ENCODE measurements at regions of chr12 and their contacts with region 1.

Region 1: DNA sequence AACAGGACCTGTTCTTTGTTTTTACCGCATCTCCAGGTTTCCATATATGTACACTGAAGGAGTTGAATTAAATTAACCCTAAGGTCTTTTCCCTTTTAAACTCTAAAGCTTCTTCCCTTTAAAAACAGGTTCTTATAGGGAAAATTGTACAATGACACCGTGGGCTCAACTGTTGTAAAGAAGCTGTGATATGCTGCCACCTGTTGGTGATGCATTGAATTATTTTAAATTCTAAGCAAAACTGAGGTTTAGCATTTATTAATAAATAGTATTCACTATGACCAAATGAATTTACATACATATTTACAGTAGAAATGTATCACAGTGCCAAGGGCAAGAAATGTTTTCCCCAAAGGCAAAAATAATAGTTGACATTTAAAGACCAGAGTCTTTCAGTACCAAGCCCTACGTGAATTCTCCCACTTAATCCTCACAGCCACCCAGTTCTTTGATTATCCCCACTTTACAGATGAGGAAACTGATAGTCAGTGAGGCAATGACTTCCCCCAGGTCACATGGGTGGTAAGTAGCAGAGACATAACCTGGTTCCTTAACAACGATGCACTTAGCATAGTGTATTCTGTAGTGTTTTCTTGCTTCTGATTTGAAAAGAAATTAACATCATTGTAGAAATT is 35.7 kb upstream of the TMEM263 start:
- DNase-seq: no peak
- ATAC-seq: no peak
- H3K4me3 Mint-ChIP-seq: peak overlapping the region; percentile 45
- H3K27ac Mint-ChIP-seq: no peak overlapping the region
- H3K4me1 Mint-ChIP-seq: peaks cover 28% of the 10 kb centered on the region
- H3K27me3 Mint-ChIP-seq: peaks cover 12% of the 10 kb centered on the region
- CTCF ChIP-seq: peak; percentile 63

Region 2: DNA sequence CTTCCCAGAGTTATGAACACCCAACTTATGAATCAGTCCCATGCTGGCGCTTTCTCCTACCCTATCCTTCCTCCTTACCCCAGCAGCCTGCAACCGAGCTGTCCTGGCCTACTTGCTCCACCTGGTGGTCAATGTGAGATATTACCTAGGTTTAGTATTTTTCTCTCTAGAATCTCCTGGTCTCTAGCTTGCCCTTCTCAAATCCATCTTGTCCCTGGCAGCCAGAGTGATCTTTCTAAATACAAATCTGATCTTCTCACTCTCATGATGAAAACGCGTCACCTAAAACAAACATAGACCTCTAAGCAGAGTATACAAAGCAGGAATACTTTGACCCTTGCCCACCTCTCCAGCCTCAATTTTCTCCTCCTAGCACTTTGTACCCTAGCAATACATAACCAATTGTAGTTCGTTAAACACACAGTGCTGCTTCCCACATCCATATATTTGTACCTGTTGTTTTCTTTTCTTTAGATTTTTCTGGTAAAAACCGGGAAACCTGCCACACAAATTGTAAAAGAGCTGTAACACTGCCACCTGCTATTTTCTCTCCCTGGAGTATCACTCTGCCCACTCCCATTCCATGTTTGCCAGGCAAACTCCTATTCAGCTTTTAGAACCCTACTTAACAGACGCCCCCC is 637.5 kb before region 1 on chr12:
- CTCF ChIA-PET with region 1: interaction called, 11 read pairs
- POLR2A ChIA-PET with region 1: no interaction called
- DNase-seq: peak; percentile 30
- ATAC-seq: peak; percentile 95
- H3K4me3 Mint-ChIP-seq: no peak overlapping the region
- H3K27ac Mint-ChIP-seq: no peak overlapping the region
- H3K4me1 Mint-ChIP-seq: no peaks in the 10 kb centered on the region
- H3K27me3 Mint-ChIP-seq: no peaks in the 10 kb centered on the region
- CTCF ChIP-seq: peak; percentile 72

Region 3: DNA sequence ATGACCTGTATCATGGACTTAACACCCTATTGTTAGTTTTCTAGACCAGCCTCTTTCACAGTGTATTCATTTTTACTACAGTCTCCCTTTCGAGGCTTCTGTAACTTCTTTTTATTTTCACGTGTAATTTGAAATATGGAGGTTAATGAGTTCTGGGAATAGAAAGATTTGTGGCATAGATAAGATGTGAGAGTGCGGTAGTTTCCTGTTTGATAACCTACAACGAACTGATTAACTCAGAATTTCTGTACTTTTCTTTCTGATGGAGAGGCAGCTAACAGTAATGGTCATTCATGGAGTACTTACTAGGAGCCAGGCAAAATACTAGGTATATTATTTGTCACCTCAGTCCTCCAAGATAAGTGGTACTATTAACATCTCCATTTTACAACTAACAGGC is 541.2 kb before region 1 on chr12:
- CTCF ChIA-PET with region 1: interaction called, 17 read pairs
- POLR2A ChIA-PET with region 1: no interaction called
- DNase-seq: no peak
- ATAC-seq: no peak
- H3K4me3 Mint-ChIP-seq: no peak overlapping the region
- H3K27ac Mint-ChIP-seq: no peak overlapping the region
- H3K4me1 Mint-ChIP-seq: no peaks in the 10 kb centered on the region
- H3K27me3 Mint-ChIP-seq: no peaks in the 10 kb centered on the region
- CTCF ChIP-seq: no peak

Region 4: DNA sequence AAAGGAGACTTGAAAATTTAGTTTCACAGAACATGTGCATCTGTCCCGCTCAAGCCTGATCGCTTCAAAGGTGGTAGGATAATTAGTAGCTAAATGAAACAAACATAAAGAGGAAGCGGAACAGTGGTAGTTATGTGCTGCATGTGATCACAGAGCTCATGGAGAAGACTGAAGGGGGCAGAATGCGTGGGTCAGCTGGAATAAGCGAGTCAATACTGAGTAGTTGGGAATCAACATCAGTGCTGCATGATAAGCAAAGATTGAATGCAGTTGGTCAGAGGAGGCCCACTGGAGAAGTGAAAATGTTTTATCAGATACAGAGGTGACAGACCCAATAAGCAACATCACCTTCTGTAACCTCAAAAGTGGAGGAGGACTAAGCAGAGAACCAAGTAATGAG is 432.4 kb before region 1 on chr12:
- CTCF ChIA-PET with region 1: interaction called, 10 read pairs
- POLR2A ChIA-PET with region 1: no interaction called
- DNase-seq: no peak
- ATAC-seq: no peak
- H3K4me3 Mint-ChIP-seq: no peak overlapping the region
- H3K27ac Mint-ChIP-seq: no peak overlapping the region
- H3K4me1 Mint-ChIP-seq: peaks cover 22% of the 10 kb centered on the region
- H3K27me3 Mint-ChIP-seq: no peaks in the 10 kb centered on the region
- CTCF ChIP-seq: no peak

Region 5: DNA sequence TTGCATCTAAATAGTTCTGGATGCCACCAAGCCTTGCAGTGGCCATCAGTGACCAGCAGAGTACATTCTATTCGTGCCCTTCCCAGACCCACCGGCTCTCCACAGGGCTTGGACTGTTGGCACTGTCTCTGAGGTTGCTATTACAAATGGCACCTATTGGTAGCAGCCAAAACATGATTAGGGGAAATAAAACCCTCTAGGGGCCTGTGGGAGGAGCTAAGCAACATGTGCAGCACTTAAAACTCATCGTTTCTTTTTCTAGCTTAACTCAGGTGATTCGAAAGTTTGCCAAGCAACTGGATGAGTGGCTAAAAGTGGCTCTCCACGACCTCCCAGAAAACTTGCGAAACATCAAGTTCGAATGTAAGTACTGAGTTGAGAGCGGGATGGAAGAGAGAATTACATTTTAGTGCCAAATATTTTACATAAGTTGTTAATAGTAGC is 210.9 kb before region 1 on chr12:
- CTCF ChIA-PET with region 1: interaction called, 11 read pairs
- POLR2A ChIA-PET with region 1: no interaction called
- DNase-seq: peak; percentile 19
- ATAC-seq: peak; percentile 55
- H3K4me3 Mint-ChIP-seq: no peak overlapping the region
- H3K27ac Mint-ChIP-seq: no peak overlapping the region
- H3K4me1 Mint-ChIP-seq: peaks cover 39% of the 10 kb centered on the region
- H3K27me3 Mint-ChIP-seq: no peaks in the 10 kb centered on the region
- CTCF ChIP-seq: no peak

Region 6: DNA sequence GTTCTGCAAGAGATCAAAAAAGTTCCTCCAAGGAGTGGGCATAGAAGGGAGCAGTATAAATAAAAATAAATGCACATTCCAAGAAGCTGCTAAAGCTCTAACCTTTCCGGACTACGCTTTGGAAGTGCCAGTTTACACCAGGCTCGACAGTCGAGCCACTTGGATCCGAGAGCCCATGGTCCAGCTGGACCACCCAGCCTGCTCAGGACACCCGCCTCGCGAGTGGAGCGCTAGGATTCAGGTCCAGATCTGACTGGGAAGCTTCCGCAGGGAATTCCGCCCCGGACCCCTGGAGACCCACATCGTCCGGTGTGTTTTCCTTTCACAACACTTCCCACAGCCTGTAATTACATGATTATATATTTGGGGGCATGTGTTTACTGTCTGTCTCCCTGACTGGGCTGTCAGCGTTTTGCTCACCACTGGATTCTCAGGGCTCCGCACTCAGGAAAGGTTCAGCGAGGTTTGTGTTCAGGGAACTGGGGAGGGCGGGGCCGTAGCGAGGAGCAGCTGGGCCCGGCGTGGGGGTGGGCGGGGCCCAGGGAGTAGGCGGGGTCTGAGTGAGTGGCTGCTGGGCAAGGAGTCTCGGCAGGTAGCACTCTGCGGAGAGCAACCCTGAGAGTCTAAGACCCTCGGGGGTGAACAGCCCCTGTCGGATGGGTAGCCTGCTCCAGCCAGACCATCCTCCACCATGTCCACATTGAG is 16.6 kb before region 1 on chr12:
- CTCF ChIA-PET with region 1: interaction called, 53 read pairs
- POLR2A ChIA-PET with region 1: no interaction called
- DNase-seq: peak; percentile 90
- ATAC-seq: peak; percentile 99
- H3K4me3 Mint-ChIP-seq: peak overlapping the region; percentile 79
- H3K27ac Mint-ChIP-seq: no peak overlapping the region
- H3K4me1 Mint-ChIP-seq: peaks cover 10% of the 10 kb centered on the region
- H3K27me3 Mint-ChIP-seq: peaks cover 42% of the 10 kb centered on the region
- CTCF ChIP-seq: no peak